Activated B cell treated with CpG ODN at 0.5 μM for 24 hours (primary cell): ENCODE measurements at regions of chrX and their contacts with region 1.

Region 1: GRCh38 chrX:7586126-7586525 is 256.8 kb upstream of the VCX start:
- DNase-seq: no peak
- ATAC-seq: no peak
- H3K4me3 Mint-ChIP-seq: no peak overlapping the region
- H3K27ac Mint-ChIP-seq: no peak overlapping the region
- H3K4me1 Mint-ChIP-seq: no peaks in the 10 kb centered on the region
- H3K27me3 Mint-ChIP-seq: no peaks in the 10 kb centered on the region
- CTCF ChIP-seq: no peak

Region 2: GRCh38 chrX:7191681-7192110 is 394.4 kb before region 1 on chrX:
- CTCF ChIA-PET with region 1: no interaction called
- POLR2A ChIA-PET with region 1: no interaction called
- intact Hi-C with region 1: loop called (anchors 5 kb)
- DNase-seq: no peak
- ATAC-seq: no peak
- H3K4me3 Mint-ChIP-seq: no peak overlapping the region
- H3K27ac Mint-ChIP-seq: no peak overlapping the region
- H3K4me1 Mint-ChIP-seq: no peaks in the 10 kb centered on the region
- H3K27me3 Mint-ChIP-seq: no peaks in the 10 kb centered on the region
- CTCF ChIP-seq: no peak

Region 3: DNA sequence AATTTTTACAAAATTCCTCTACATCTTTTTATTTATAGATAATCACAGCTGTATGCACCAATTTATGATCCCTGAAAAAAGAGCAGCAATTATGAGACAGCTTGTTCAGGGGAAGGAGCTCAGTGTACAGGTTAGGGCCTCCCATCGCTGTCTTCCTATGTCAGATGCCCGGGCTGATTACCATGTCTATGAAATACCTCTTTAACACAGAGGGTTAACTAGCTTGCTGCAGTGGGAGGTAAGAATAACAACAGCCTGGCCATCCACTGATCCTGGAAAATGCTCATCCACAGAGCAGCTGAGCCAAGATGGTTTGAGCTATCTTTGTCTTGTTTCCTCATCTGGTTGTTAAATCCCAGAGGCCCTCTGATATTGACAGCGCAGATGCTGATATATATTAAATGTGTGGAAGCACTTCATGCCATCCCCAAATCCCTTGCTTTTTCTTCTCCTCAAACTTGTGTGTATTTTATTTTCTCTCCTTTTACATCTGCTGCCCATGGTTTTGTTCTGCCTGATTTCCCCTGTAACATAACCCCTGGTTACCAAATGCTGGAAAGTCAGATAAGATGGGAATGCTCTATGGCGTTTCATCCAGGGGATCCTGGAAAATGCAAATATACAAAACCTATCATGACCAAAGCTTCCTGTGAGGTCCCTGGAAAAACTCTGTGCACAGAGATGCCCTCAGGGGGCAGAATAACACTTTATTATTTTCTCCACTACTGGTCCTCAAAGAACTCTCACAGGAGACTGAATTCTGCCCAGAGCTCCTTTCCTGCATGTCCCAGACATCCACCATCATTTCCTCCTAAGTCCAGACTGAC is 352.3 kb before region 1 on chrX:
- CTCF ChIA-PET with region 1: no interaction called
- POLR2A ChIA-PET with region 1: no interaction called
- intact Hi-C with region 1: loop called (anchors 5 kb)
- DNase-seq: no peak
- ATAC-seq: no peak
- H3K4me3 Mint-ChIP-seq: no peak overlapping the region
- H3K27ac Mint-ChIP-seq: no peak overlapping the region
- H3K4me1 Mint-ChIP-seq: peaks cover 13% of the 10 kb centered on the region
- H3K27me3 Mint-ChIP-seq: no peaks in the 10 kb centered on the region
- CTCF ChIP-seq: no peak